ENCODE measurements at regions of chr10 and their contacts with region 1.

Region 1: GRCh38 chr10:128095027-128095752 is 31.0 kb downstream of the MKI67 start:
- DNase-seq: no peak
- H3K4me3 ChIP-seq: no peak overlapping the region
- H3K27ac ChIP-seq: no peak overlapping the region
- H3K4me1 ChIP-seq: 0 out of 7 replicates have a peak, but pooled peaks cover 0 to 3% (median under 1%) of the 10 kb centered on the region in 4 experiments
- H3K27me3 ChIP-seq: no peaks in the 10 kb centered on the region
- CTCF ChIP-seq: no peak
- EP300 ChIP-seq: no peak
- POLR2A ChIP-seq: no peak
- RAD21 ChIP-seq: no peak

Region 2: GRCh38 chr10:128078136-128078969 is 16.8 kb before region 1 on chr10:
- CTCF ChIA-PET with region 1: interaction called, 26 read pairs
- POLR2A ChIA-PET with region 1: interaction called, 3 read pairs
- DNase-seq: peak; percentile 19 to 88
- H3K4me3 ChIP-seq: no peak overlapping the region
- H3K27ac ChIP-seq: no peak overlapping the region
- H3K4me1 ChIP-seq: peaks cover 0 to 2% (median 0%) of the 10 kb centered on the region in 4 experiments; a peak in 1 of 7 replicates
- H3K27me3 ChIP-seq: no peaks in the 10 kb centered on the region; a peak in 1 of 7 replicates
- CTCF ChIP-seq: peak; percentile 77 to 90 (median 85)
- EP300 ChIP-seq: no peak
- POLR2A ChIP-seq: no peak
- RAD21 ChIP-seq: peak; percentile 75 to 83

Region 3: DNA sequence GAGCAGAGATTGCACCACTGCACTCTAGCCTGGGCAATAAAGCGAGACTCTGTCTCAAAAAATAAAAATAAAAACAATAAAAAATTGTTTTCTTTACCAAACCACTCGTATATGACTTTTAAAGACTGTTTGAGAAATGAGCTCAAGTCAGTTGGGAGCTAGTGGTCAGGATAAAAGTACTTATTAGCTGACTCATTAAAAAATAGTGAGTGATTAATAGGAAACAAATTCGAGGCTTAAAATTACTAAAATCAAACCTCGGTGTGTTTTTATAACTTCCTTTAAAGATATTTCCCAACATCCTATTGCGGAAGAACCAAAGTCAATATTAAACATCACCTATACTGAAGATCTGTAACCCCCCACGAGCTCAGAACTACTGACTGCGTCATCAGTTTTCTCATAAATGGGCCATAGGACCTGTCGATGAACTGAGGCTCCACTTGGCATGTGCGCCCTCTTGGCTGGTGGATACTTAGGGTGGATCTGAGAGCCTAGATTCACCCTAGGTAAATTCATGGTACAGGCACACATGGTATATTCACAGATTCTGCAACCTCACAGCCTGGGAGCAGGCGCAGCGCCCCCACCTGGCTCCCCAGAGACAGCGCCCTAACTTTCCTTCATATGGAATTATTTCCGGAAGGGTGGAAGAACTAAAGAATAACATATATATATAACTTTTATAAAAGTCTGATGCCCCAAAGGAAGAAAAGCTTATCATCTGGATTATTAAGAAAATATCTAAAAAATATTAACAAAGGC is 21.8 kb after region 1 on chr10:
- CTCF ChIA-PET with region 1: interaction called, 10 read pairs
- POLR2A ChIA-PET with region 1: interaction called, 3 read pairs
- DNase-seq: no peak
- H3K4me3 ChIP-seq: no peak overlapping the region
- H3K27ac ChIP-seq: no peak overlapping the region
- H3K4me1 ChIP-seq: no peaks in the 10 kb centered on the region
- H3K27me3 ChIP-seq: peaks cover 0 to under 1% (median 0%) of the 10 kb centered on the region in 4 experiments; a peak in 1 of 7 replicates
- CTCF ChIP-seq: peak; percentile 58 to 76 (median 63)
- EP300 ChIP-seq: no peak
- POLR2A ChIP-seq: no peak
- RAD21 ChIP-seq: peak; percentile 31 to 37

Region 4: GRCh38 chr10:128137877-128138276 is 42.7 kb after region 1 on chr10:
- CTCF ChIA-PET with region 1: no interaction called
- POLR2A ChIA-PET with region 1: no interaction called
- DNase-seq: no peak
- H3K4me3 ChIP-seq: no peak overlapping the region
- H3K27ac ChIP-seq: no peak overlapping the region
- H3K4me1 ChIP-seq: no peaks in the 10 kb centered on the region
- H3K27me3 ChIP-seq: no peaks in the 10 kb centered on the region
- CTCF ChIP-seq: no peak
- EP300 ChIP-seq: no peak
- POLR2A ChIP-seq: no peak
- RAD21 ChIP-seq: no peak

Region 5: DNA sequence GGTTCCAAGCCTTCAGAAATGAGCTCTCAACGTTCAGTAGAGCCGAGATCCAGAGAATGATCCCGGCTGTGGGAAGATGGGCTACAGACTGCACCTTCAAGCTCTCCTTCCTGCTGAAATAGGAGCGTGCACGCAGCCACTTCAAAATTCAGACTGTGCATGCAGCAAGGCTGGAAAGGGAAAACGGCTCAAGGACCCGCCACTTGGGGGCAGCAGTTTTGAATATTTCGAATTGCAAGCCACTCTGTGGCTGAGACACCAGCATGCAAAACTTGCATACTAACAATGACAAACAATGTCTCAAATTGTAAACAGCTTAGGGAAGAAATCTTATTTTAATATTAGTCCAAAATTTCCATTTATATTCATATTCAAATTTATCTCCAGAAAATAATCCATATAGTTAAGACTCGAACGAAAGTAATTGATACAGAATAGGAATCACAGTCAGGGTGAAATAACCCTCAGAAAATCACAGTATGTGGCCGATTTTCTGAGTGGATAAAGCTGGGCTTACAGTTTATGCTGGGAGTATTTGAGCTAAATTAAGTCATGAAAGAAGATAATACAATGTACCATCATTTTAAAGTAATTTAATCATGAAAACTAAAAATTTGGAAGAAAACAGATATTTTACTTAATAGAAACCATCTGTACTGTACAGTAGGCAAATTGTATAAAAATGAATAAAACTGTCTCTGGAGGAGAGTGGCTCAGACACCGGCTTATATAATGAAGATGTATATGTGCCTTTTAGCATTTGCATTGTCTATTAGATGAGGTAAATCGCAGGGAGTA is 168.9 kb after region 1 on chr10:
- CTCF ChIA-PET with region 1: no interaction called
- POLR2A ChIA-PET with region 1: no interaction called
- DNase-seq: peak; percentile 27 to 80
- H3K4me3 ChIP-seq: no peak overlapping the region
- H3K27ac ChIP-seq: no peak overlapping the region
- H3K4me1 ChIP-seq: peaks cover 0 to 5% (median 0%) of the 10 kb centered on the region in 4 experiments; a peak in 3 of 7 replicates
- H3K27me3 ChIP-seq: no peaks in the 10 kb centered on the region; a peak in 2 of 7 replicates
- CTCF ChIP-seq: peak; percentile 64 to 72 (median 66)
- EP300 ChIP-seq: no peak
- POLR2A ChIP-seq: no peak
- RAD21 ChIP-seq: peak; percentile 61 to 62